B cell (primary cell): ENCODE measurements at regions of chr11 and their contacts with region 1.

Region 1: GRCh38 chr11:45771566-45772448 is 33.1 kb upstream of the SLC35C1 start:
- DNase-seq: peak; percentile 83
- ATAC-seq: peak; percentile 80
- H3K4me3 ChIP-seq: peak overlapping the region; percentile 35 to 86 (median 63)
- H3K4me3 Mint-ChIP-seq: peak overlapping the region; percentile 90
- H3K27ac ChIP-seq: peak overlapping the region in 1 of 2 donors; percentile 8
- H3K27ac Mint-ChIP-seq: peak overlapping the region; percentile 50
- H3K4me1 ChIP-seq: peaks cover 6 to 16% of the 10 kb centered on the region in 2 donors
- H3K4me1 Mint-ChIP-seq: peaks cover 18% of the 10 kb centered on the region
- H3K27me3 ChIP-seq: no peaks in the 10 kb centered on the region
- H3K27me3 Mint-ChIP-seq: peaks cover 7% of the 10 kb centered on the region
- CTCF ChIP-seq: peak; percentile 77

Region 2: GRCh38 chr11:45362636-45363035 is 409.2 kb before region 1 on chr11:
- CTCF ChIA-PET with region 1: no interaction called
- POLR2A ChIA-PET with region 1: no interaction called
- intact Hi-C with region 1: no loop called
- DNase-seq: no peak
- ATAC-seq: no peak
- H3K4me3 ChIP-seq: no peak overlapping the region
- H3K4me3 Mint-ChIP-seq: no peak overlapping the region
- H3K27ac ChIP-seq: no peak overlapping the region
- H3K27ac Mint-ChIP-seq: no peak overlapping the region
- H3K4me1 ChIP-seq: no peaks in the 10 kb centered on the region
- H3K4me1 Mint-ChIP-seq: no peaks in the 10 kb centered on the region
- H3K27me3 ChIP-seq: peaks cover 0 to 3% (median 1%) of the 10 kb centered on the region in 4 experiments
- H3K27me3 Mint-ChIP-seq: peaks cover 52% of the 10 kb centered on the region
- CTCF ChIP-seq: no peak

Region 3: DNA sequence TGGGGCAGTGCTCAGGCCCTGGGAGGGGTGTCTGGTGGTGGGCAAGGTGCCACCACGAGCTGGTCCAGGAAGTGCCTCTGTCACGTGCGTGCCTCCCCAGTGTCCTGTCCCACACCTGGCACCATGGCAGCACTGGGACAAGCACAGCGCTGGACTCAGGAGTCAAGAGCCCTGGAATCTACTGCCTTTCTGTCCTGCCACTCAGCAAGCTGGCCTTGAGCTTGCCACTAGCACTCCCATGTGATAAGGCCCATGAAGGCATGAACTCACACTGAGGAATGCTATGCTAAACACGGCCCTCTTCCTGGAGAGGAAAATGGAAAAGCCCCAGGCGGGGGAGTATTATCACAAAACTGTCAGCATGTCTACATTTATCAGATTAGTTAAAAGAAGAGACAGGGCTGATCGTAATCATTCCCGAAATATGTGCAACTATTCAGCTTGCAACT is 17.5 kb before region 1 on chr11:
- CTCF ChIA-PET with region 1: interaction called, 11 read pairs
- POLR2A ChIA-PET with region 1: no interaction called
- intact Hi-C with region 1: no loop called
- DNase-seq: no peak
- ATAC-seq: no peak
- H3K4me3 ChIP-seq: no peak overlapping the region
- H3K4me3 Mint-ChIP-seq: no peak overlapping the region
- H3K27ac ChIP-seq: no peak overlapping the region
- H3K27ac Mint-ChIP-seq: no peak overlapping the region
- H3K4me1 ChIP-seq: no peaks in the 10 kb centered on the region
- H3K4me1 Mint-ChIP-seq: no peaks in the 10 kb centered on the region
- H3K27me3 ChIP-seq: peaks cover 0 to 18% (median 2%) of the 10 kb centered on the region in 4 experiments
- H3K27me3 Mint-ChIP-seq: peaks cover 59% of the 10 kb centered on the region
- CTCF ChIP-seq: no peak

Region 4: DNA sequence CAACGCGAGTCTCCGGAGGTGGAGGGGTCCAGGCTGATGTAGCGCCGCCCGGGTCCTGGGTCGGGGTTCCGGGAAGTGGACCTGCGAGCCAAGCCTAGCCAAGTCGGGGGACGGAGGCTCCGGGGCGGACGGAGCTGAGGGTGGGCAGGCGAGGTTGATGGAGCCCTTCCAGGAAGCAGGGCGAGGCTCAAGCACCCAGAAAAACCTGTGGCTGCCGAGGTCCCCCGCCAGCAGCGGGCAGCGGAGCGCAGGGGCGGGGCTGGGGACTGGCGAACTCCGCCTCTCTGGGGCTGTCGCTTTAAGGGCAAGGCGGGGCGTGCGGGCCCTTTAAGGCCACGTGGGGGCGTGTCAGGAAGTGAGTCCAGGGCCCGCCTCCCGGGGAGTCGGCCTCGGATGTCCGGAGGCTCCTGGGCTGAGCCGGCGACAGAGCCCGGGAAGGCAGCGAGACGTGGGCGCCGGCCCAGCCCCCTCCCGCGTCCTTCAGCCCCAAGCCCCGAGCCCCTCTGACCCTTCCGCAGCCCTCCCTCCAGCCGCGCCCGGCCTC is 33.0 kb after region 1 on chr11 and contains the start of gene SLC35C1:
- CTCF ChIA-PET with region 1: interaction called, 13 read pairs
- POLR2A ChIA-PET with region 1: interaction called, 4 read pairs
- intact Hi-C with region 1: loop called (anchors 1 kb)
- DNase-seq: peak; percentile 95
- ATAC-seq: peak; percentile 96
- H3K4me3 ChIP-seq: peak within 1 kb of the TSS; percentile 42 to 96 (median 92)
- H3K4me3 Mint-ChIP-seq: peak within 1 kb of the TSS; percentile 94
- H3K27ac ChIP-seq: peak within 1 kb of the TSS; percentile 62 to 67
- H3K27ac Mint-ChIP-seq: peak within 1 kb of the TSS; percentile 91
- H3K4me1 ChIP-seq: peaks cover 27 to 35% of the 10 kb centered on the region in 2 donors
- H3K4me1 Mint-ChIP-seq: peaks cover 41% of the 10 kb centered on the region
- H3K27me3 ChIP-seq: no peaks in the 10 kb centered on the region
- H3K27me3 Mint-ChIP-seq: no peaks in the 10 kb centered on the region
- CTCF ChIP-seq: no peak
- total RNA-seq, gene SLC35C1: 12.5 and 13.8 TPM in 2 replicates

Region 5: DNA sequence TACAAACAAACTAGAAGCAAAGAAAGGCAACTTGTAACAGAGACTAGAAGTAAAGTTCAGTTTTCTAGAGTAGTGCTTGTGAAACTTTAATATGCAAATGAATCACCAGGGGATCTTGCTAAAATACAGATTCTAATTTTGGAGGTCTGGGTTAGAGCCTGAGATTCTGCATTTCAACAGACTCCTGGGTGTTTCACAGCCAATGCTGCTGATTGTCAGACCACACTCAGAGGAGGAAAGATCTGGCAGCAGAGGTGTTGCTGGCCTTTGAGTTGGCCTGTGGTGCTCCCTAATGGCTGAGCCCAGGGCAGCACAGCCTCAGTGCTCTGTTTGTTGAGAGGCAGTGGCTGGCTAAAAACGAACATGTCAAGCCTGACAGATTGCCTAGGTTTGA is 80.9 kb after region 1 on chr11:
- CTCF ChIA-PET with region 1: interaction called, 12 read pairs
- POLR2A ChIA-PET with region 1: no interaction called
- intact Hi-C with region 1: no loop called
- DNase-seq: no peak
- ATAC-seq: peak; percentile 32
- H3K4me3 ChIP-seq: no peak overlapping the region
- H3K4me3 Mint-ChIP-seq: peak overlapping the region; percentile 56
- H3K27ac ChIP-seq: peak overlapping the region in 1 of 2 donors; percentile 30
- H3K27ac Mint-ChIP-seq: no peak overlapping the region
- H3K4me1 ChIP-seq: peaks cover 25 to 30% of the 10 kb centered on the region in 2 donors
- H3K4me1 Mint-ChIP-seq: peaks cover 45% of the 10 kb centered on the region
- H3K27me3 ChIP-seq: no peaks in the 10 kb centered on the region
- H3K27me3 Mint-ChIP-seq: no peaks in the 10 kb centered on the region
- CTCF ChIP-seq: no peak

Region 6: GRCh38 chr11:45973601-45974000 is 201.8 kb after region 1 on chr11:
- CTCF ChIA-PET with region 1: no interaction called
- POLR2A ChIA-PET with region 1: no interaction called
- intact Hi-C with region 1: no loop called
- DNase-seq: no peak
- ATAC-seq: no peak
- H3K4me3 ChIP-seq: no peak overlapping the region
- H3K4me3 Mint-ChIP-seq: no peak overlapping the region
- H3K27ac ChIP-seq: no peak overlapping the region
- H3K27ac Mint-ChIP-seq: no peak overlapping the region
- H3K4me1 ChIP-seq: no peaks in the 10 kb centered on the region
- H3K4me1 Mint-ChIP-seq: no peaks in the 10 kb centered on the region
- H3K27me3 ChIP-seq: no peaks in the 10 kb centered on the region
- H3K27me3 Mint-ChIP-seq: no peaks in the 10 kb centered on the region
- CTCF ChIP-seq: no peak

Region 7: GRCh38 chr11:46121724-46122477 is 350.1 kb after region 1 on chr11:
- CTCF ChIA-PET with region 1: no interaction called
- POLR2A ChIA-PET with region 1: no interaction called
- intact Hi-C with region 1: loop called (anchors 5 kb)
- DNase-seq: peak; percentile 91
- ATAC-seq: peak; percentile 47
- H3K4me3 ChIP-seq: peak overlapping the region; percentile 38 to 89 (median 78)
- H3K4me3 Mint-ChIP-seq: peak overlapping the region; percentile 93
- H3K27ac ChIP-seq: peak overlapping the region in 1 of 2 donors; percentile 61
- H3K27ac Mint-ChIP-seq: peak overlapping the region; percentile 97
- H3K4me1 ChIP-seq: peaks cover 21 to 22% of the 10 kb centered on the region in 2 donors
- H3K4me1 Mint-ChIP-seq: peaks cover 29% of the 10 kb centered on the region
- H3K27me3 ChIP-seq: no peaks in the 10 kb centered on the region
- H3K27me3 Mint-ChIP-seq: no peaks in the 10 kb centered on the region
- CTCF ChIP-seq: no peak